ENCODE measurements at regions of chr7 and their contacts with region 1.

Region 1: GRCh38 chr7:98399890-98400541 is 874 bp downstream of the BAIAP2L1 start:
- DNase-seq: no peak
- H3K4me3 ChIP-seq: peak overlapping the region; percentile 41 to 84 (median 79)
- H3K27ac ChIP-seq: peak overlapping the region; percentile 77 to 88
- H3K4me1 ChIP-seq: no peaks in the 10 kb centered on the region
- H3K27me3 ChIP-seq: no peaks in the 10 kb centered on the region
- CTCF ChIP-seq: no peak
- POLR2A ChIP-seq: no peak

Region 2: DNA sequence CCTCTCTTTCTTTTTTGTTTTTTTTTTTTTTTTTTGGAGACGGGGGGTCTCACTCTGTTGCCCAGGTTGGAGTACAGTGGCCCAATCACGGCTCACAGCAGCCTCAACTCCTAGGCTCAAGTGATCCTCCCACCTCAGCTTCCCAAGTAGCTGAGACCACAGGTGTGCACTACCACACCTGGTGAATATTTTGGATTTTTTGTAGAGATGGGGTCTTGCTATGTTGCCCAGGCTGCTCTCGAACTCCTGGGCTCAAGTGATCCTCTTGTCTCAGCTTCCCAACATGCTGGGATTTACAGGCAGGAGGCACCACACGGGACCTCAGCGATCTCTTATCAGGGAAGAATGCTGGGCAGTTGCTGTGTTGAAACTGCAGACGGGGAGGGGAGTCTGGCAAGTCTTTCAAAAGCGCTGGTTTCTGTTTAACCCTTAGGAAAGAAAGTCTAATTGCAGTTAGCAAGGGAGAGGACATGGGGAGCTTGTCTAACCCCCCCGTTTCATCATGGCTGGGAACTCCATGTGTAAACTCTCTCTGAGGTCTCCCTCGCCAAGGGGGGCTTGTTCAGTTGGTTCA is 333.0 kb before region 1 on chr7:
- intact Hi-C with region 1: no loop called
- DNase-seq: no peak
- H3K4me3 ChIP-seq: no peak overlapping the region
- H3K27ac ChIP-seq: no peak overlapping the region
- H3K4me1 ChIP-seq: no peaks in the 10 kb centered on the region
- H3K27me3 ChIP-seq: no peaks in the 10 kb centered on the region
- CTCF ChIP-seq: no peak
- POLR2A ChIP-seq: no peak

Region 3: DNA sequence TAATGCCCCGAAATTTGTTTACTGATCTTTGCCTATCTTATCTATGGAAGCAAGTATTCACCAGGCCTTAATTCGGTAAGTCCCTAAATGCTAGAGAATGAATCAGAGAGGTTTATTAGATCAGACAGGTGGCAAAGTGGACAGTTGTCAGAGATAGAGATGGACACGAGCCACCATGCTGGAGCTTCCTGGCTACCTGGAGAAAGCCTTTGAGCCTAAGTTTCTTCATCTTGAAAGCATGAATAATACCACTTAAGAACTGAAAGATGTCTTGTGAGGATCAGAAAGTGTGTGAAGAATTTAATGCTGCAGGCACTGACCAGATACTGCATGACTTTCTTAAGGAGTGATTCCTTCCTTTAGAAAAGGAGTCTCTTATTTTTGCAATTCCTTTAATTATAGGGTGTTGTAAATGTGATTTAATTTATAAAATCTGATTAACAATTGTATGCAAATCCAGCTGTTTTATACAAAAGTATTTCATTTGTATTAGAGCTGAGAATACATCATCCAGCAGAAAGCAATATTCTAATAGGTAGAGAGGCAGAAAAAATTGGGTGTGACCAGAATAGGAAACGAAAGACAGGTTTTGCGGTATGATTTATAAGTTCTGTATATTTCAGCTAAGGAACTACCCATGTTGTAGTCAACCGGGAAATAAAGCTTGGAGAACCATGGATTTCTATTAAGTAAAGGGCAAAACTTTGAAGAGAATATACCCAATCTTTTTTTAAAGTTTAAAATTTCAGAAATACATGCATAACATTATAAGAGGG is 661.2 kb after region 1 on chr7:
- intact Hi-C with region 1: loop called (anchors 10 kb)
- DNase-seq: no peak
- H3K4me3 ChIP-seq: no peak overlapping the region
- H3K27ac ChIP-seq: no peak overlapping the region
- H3K4me1 ChIP-seq: no peaks in the 10 kb centered on the region
- H3K27me3 ChIP-seq: no peaks in the 10 kb centered on the region
- CTCF ChIP-seq: no peak
- POLR2A ChIP-seq: no peak

Measured in breast epithelium (tissue), 4 donors.